Ascending aorta (tissue), 2 donors: ENCODE measurements at regions of chr17 and their contacts with region 1.

Region 1: DNA sequence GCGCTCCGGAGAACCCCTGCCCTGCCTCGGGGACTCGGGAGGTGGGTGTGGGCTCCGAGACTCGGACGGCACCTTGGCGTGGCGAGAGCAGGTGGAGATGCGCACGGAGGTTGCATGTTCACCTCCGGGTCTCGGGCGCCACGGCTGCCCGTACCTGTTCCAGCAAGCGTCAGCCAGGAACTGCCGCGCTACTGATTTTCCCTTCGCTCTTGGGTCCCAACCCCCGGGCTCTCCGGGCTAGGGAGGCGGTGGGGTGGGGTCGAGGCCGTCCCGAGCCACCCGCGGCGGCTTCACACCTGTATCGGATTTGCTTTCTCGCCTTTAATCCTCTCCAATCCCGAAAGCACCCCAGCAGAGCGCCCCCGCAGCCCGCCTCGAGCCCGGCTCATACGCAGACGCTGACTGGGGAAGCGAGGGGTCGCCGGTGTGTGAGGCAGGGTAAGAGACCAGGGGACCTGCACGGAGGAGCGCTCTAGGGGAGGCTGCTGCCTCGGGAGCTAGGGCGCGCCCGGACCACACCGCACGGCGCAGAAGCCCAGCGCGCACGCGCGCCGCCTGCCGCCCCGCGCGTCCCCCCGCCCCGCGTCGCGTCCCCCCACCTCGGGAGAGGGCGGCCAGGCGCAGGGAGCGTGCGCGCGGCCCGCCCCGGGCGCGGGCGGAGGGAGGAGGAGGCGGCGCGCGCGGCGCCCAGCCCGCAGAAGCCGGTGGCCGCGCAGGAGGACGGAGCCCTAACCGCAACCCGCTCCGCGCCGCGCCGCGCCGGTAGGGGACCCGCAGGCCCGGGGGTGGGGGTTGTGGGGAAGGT is at the start of gene DUSP14:
- DNase-seq: peak; percentile 12 to 84
- H3K4me3 ChIP-seq: peak within 1 kb of the TSS; percentile 96 to 99
- H3K27ac ChIP-seq: peak within 1 kb of the TSS; percentile 75 to 90
- H3K4me1 ChIP-seq: peaks cover 3 to 20% of the 10 kb centered on the region in 2 donors
- H3K27me3 ChIP-seq: no peaks in the 10 kb centered on the region
- CTCF ChIP-seq: no peak
- total RNA-seq, gene DUSP14: 4.6 TPM

Region 2: DNA sequence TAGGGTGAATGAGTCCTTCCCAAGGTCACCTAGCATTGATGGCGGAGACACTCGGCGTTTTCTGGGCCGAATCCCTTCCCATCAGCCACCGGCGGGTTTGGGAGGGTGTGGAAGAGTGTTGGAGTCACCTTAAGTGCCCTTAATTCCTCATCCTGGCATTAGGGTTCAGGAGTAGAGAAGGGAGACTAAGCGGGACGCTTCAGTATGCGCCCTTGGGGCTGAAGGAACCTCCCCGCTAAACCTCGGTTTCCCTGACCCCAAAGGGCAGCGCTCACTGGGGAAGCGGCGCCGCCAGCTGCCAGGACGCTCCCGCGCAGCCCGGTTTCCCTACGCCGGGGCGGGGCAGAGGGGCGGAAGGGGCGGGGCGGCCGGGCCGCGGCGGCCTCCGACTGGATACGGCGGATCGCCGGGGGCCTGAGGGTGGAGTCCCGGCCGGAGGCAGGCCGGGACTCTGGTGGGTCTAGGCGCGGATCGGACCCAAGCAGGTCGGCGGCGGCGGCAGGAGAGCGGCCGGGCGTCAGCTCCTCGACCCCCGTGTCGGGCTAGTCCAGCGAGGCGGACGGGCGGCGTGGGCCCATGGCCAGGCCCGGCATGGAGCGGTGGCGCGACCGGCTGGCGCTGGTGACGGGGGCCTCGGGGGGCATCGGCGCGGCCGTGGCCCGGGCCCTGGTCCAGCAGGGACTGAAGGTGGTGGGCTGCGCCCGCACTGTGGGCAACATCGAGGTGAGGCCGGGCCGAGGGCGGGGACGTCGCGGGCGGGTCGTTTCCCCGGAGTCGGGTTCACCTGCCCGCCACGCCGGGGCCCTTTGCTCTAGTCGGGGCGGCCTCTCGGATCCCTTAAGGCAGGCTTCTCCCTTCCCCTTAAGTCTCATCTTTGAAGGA is 897.7 kb before region 1 on chr17 and contains the start of gene DHRS11:
- intact Hi-C with region 1: loop called (anchors 10 kb)
- DNase-seq: peak in 1 of 2 donors; percentile 89
- H3K4me3 ChIP-seq: peak within 1 kb of the TSS; percentile 74 to 95
- H3K27ac ChIP-seq: peak within 1 kb of the TSS; percentile 11 to 29
- H3K4me1 ChIP-seq: peaks cover 0 to 7% of the 10 kb centered on the region in 2 donors
- H3K27me3 ChIP-seq: no peaks in the 10 kb centered on the region
- CTCF ChIP-seq: no peak
- total RNA-seq, gene DHRS11: 11.8 TPM

Region 3: GRCh38 chr17:37406635-37407461 is 82.6 kb before region 1 on chr17 and contains the starts of genes ACACA and TADA2A:
- intact Hi-C with region 1: loop called (anchors 2 kb)
- DNase-seq: peak; percentile 22 to 88
- H3K4me3 ChIP-seq: peak within 1 kb of the TSS; percentile 72 to 95
- H3K27ac ChIP-seq: peak within 1 kb of the TSS; percentile 90 to 94
- H3K4me1 ChIP-seq: peaks cover 0 to 16% of the 10 kb centered on the region in 2 donors
- H3K27me3 ChIP-seq: no peaks in the 10 kb centered on the region
- CTCF ChIP-seq: peak in 1 of 3 experiments; percentile 22
- total RNA-seq, gene ACACA: 69.0 TPM
- total RNA-seq, gene TADA2A: 7.7 TPM

Region 4: DNA sequence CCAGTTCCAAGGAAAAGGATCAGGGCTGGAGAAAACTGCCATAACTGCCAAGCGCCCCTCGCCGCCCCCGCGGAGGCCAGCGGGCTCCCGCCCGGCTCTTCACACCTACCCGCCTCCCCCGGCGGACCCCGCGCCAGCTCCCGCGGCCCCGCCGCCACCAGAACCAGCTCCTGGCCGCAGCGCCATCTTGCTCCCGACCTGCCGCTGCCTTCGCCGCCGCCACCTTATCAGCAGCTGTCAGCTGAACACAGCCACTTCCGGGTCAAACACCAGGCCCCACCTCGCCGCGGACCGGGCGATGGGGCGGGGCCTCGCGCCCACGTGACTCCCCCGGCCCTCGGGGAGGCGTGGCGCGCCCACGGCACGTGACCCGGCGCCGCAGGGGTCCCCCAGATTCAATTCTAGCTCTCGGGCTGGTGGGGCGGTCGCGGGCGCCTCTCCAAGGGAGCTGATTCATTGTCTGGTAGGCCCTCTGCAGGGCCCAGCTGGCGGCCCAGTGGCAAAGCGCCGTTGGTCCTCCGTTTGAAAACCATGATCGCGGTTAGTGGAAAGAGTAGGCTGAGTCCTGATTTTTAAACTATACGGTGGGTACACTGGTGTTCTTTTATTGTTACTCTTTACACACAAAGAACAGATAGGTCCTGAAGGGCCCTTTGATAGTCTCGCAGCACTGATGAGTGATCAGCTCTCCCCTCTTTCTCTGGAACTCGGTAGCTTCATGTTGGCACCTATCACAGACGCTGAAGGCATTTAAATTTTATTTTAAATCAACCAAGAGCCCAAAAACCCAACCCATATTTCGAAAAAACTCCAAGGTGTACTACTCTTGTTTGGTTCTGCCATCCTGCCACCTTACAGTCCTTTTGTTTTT is 120.0 kb after region 1 on chr17 and contains the start of gene SYNRG:
- intact Hi-C with region 1: loop called (anchors 1 kb)
- DNase-seq: peak; percentile 89 to 99
- H3K4me3 ChIP-seq: peak within 1 kb of the TSS; percentile 69 to 96
- H3K27ac ChIP-seq: peak within 1 kb of the TSS; percentile 82 to 89
- H3K4me1 ChIP-seq: peaks cover 0 to 9% of the 10 kb centered on the region in 2 donors
- H3K27me3 ChIP-seq: no peaks in the 10 kb centered on the region
- CTCF ChIP-seq: peak; percentile 32 to 36 (median 35)
- total RNA-seq, gene SYNRG: 47.1 TPM